CD4-positive, alpha-beta memory T cell (primary cell): ENCODE measurements at regions of chr2 and their contacts with region 1.

Region 1: DNA sequence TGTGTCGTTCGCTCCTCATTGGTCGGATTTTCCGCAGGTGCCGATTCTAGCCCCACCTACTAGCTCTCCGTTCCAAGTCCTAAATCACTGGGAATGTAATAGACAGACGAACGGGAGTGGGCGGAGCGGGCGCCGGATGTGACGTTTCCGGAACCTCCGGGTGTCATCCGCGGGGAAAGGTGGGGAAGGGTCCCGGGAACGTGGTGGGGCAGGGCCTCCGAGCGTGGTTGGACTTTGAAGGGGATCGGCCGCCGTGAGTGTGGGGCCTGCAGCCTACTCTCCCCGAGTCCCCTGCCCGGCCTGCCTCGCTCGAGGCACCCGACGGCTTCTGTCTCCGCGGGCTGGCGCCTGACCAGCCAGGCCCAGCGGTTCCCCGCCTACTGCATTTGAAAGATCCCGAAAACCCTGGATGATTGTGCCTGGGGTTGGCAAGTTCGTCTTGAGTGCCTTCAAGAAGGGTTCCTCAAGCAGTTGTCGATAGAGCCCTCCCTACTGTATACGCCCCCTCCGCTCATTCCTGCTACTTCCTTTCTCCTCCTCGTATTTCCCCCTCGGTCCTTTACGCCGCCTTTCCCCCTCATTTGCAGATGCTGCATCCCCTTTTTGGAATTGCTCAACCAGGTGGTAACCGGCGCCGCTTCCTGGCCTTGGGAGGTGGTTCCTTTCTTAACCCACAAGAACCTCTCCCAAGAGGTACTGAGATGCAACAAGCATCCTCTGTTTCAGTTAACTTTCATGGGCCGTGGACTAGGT is at the start of gene STAMBP:
- DNase-seq: peak; percentile 87 to 95 (median 91)
- H3K4me3 ChIP-seq: peak within 1 kb of the TSS; percentile 64 to 81
- H3K4me3 Mint-ChIP-seq: peak within 1 kb of the TSS; percentile 91 to 99 (median 96)
- H3K27ac ChIP-seq: peak within 1 kb of the TSS; percentile 92
- H3K27ac Mint-ChIP-seq: peak within 1 kb of the TSS; percentile 94 to 100 (median 98)
- H3K4me1 ChIP-seq: peaks cover 45% of the 10 kb centered on the region
- H3K4me1 Mint-ChIP-seq: peaks cover 34 to 49% (median 40%) of the 10 kb centered on the region in 4 donors
- H3K27me3 ChIP-seq: no peaks in the 10 kb centered on the region
- H3K27me3 Mint-ChIP-seq: no peaks in the 10 kb centered on the region
- total RNA-seq, gene STAMBP: 34.8 to 37.3 TPM

Region 2: DNA sequence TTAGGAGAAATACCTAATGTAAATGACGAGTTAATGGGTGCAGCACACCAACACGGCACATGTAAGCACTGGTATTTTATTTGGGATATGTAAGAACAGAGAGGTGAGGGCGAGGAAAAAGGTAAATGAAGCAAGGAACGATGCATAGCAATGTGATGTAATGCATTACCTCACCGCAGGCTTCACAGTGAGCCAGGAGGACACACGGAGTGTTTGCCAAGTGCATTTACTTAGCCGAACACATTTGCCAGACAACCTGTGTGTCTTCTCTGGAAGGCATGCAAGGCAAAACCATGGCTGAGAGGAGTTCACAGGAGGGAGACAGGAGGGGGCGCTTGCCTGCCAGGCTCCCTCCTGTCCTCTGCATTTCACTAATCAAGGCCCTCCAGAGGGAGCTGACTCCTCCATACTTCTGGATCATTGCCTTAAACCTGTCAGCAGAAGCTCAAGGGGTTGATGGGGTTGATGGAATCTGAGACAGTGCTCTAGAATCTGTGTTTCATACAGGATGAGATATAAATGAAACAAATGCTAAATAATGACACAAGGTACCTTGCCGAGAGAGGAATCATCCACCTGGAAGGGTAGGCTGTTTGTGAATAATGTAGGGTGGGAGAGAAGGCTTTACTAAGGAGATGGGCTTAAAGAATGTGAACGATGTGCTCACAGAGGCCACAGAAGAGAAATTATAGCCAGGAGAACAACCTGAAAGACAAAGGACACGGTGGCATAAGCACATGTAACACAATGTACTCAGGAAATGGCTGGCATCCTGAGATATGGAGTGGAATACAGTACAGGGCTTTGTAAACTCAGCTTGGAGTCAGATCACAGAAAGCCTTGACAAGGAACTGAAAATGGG is 82.7 kb before region 1 on chr2:
- CTCF ChIA-PET with region 1: no interaction called
- POLR2A ChIA-PET with region 1: no interaction called
- intact Hi-C with region 1: no loop called
- DNase-seq: no peak
- H3K4me3 ChIP-seq: no peak overlapping the region
- H3K4me3 Mint-ChIP-seq: no peak overlapping the region
- H3K27ac ChIP-seq: no peak overlapping the region
- H3K27ac Mint-ChIP-seq: peak overlapping the region in 3 of 7 donors; percentile 6 to 63 (median 23)
- H3K4me1 ChIP-seq: no peaks in the 10 kb centered on the region
- H3K4me1 Mint-ChIP-seq: peaks cover 0 to 4% (median 1%) of the 10 kb centered on the region in 4 donors
- H3K27me3 ChIP-seq: no peaks in the 10 kb centered on the region
- H3K27me3 Mint-ChIP-seq: no peaks in the 10 kb centered on the region

Region 3: DNA sequence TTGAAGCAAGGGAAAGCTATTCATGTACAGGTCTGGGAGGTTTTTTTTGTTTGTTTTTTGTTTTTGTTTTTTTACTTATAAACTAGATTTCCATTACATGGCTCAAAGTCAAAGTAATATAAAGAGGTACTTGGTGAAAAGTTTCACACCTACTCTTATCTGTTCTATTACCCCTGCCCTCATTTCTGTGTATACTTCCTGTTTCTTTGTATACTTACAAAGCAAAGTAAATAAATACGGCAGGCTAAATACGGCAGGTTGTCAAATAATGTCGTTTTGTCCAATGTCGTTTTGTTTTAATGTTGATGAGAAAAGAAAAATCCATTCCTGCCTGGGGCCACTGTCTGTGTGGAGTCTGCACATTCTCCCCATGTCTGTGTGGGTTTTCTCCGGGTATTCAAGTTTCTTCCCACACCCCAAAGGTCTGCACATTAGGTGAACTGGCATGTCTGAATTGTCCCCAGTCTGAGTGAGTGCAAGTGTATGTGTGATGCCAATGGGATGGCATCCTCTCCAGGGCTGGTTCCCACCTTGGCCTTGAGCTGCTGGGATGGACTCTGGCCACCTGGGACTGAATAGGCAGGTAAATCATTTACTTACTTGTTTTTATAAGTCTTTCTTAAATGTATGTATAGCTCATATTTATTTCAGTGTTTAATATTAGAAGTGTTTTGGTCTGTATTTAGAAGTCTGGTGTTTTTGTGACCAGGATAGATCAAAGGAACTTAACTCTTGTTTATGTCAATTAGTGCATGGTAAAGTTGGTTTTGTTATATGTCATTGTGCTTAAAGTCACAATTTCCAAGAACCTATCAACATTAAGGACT is 13.1 kb after region 1 on chr2:
- CTCF ChIA-PET with region 1: interaction called, 10 read pairs
- POLR2A ChIA-PET with region 1: interaction called, 3 read pairs
- intact Hi-C with region 1: no loop called
- DNase-seq: no peak
- H3K4me3 ChIP-seq: no peak overlapping the region
- H3K4me3 Mint-ChIP-seq: no peak overlapping the region
- H3K27ac ChIP-seq: no peak overlapping the region
- H3K27ac Mint-ChIP-seq: peak overlapping the region in 3 of 7 donors; percentile 18 to 44 (median 26)
- H3K4me1 ChIP-seq: no peaks in the 10 kb centered on the region
- H3K4me1 Mint-ChIP-seq: peaks cover 15 to 27% (median 18%) of the 10 kb centered on the region in 4 donors
- H3K27me3 ChIP-seq: no peaks in the 10 kb centered on the region
- H3K27me3 Mint-ChIP-seq: no peaks in the 10 kb centered on the region

Region 4: GRCh38 chr2:74198461-74199274 is 369.7 kb after region 1 on chr2 and contains the start of gene MTHFD2:
- CTCF ChIA-PET with region 1: interaction called, 16 read pairs
- POLR2A ChIA-PET with region 1: interaction called, 6 read pairs
- intact Hi-C with region 1: no loop called
- DNase-seq: peak; percentile 84 to 89 (median 86)
- H3K4me3 ChIP-seq: peak within 1 kb of the TSS; percentile 85 to 91
- H3K4me3 Mint-ChIP-seq: peak within 1 kb of the TSS; percentile 94 to 100 (median 98)
- H3K27ac ChIP-seq: peak within 1 kb of the TSS; percentile 86
- H3K27ac Mint-ChIP-seq: peak within 1 kb of the TSS; percentile 89 to 100 (median 99)
- H3K4me1 ChIP-seq: peaks cover 35% of the 10 kb centered on the region
- H3K4me1 Mint-ChIP-seq: peaks cover 20 to 41% (median 31%) of the 10 kb centered on the region in 4 donors
- H3K27me3 ChIP-seq: no peaks in the 10 kb centered on the region
- H3K27me3 Mint-ChIP-seq: no peaks in the 10 kb centered on the region
- total RNA-seq, gene MTHFD2: 23.8 to 25.0 TPM